ENCODE measurements at regions of chr9 and their contacts with region 1.

Region 1: GRCh38 chr9:15510789-15511575 is at the start of gene PSIP1:
- DNase-seq: peak; percentile 93
- ATAC-seq: peak; percentile 86
- H3K4me3 Mint-ChIP-seq: peak within 1 kb of the TSS; percentile 93
- H3K27ac Mint-ChIP-seq: peak within 1 kb of the TSS; percentile 100
- H3K4me1 Mint-ChIP-seq: peaks cover 49% of the 10 kb centered on the region
- H3K27me3 Mint-ChIP-seq: no peaks in the 10 kb centered on the region
- CTCF ChIP-seq: no peak
- total RNA-seq, gene PSIP1: 123 to 132 TPM

Region 2: GRCh38 chr9:15485836-15486666 is 24.9 kb before region 1 on chr9:
- CTCF ChIA-PET with region 1: interaction called, 6 read pairs
- POLR2A ChIA-PET with region 1: interaction called, 10 read pairs
- intact Hi-C with region 1: no loop called
- DNase-seq: no peak
- ATAC-seq: peak; percentile 65
- H3K4me3 Mint-ChIP-seq: no peak overlapping the region
- H3K27ac Mint-ChIP-seq: peak overlapping the region; percentile 75
- H3K4me1 Mint-ChIP-seq: peaks cover 35% of the 10 kb centered on the region
- H3K27me3 Mint-ChIP-seq: no peaks in the 10 kb centered on the region
- CTCF ChIP-seq: peak; percentile 68

Region 3: GRCh38 chr9:15522130-15522755 is 11.3 kb after region 1 on chr9:
- CTCF ChIA-PET with region 1: interaction called, 8 read pairs
- POLR2A ChIA-PET with region 1: interaction called, 14 read pairs
- intact Hi-C with region 1: no loop called
- DNase-seq: no peak
- ATAC-seq: peak; percentile 45
- H3K4me3 Mint-ChIP-seq: no peak overlapping the region
- H3K27ac Mint-ChIP-seq: no peak overlapping the region
- H3K4me1 Mint-ChIP-seq: peaks cover 4% of the 10 kb centered on the region
- H3K27me3 Mint-ChIP-seq: no peaks in the 10 kb centered on the region
- CTCF ChIP-seq: no peak

Region 4: DNA sequence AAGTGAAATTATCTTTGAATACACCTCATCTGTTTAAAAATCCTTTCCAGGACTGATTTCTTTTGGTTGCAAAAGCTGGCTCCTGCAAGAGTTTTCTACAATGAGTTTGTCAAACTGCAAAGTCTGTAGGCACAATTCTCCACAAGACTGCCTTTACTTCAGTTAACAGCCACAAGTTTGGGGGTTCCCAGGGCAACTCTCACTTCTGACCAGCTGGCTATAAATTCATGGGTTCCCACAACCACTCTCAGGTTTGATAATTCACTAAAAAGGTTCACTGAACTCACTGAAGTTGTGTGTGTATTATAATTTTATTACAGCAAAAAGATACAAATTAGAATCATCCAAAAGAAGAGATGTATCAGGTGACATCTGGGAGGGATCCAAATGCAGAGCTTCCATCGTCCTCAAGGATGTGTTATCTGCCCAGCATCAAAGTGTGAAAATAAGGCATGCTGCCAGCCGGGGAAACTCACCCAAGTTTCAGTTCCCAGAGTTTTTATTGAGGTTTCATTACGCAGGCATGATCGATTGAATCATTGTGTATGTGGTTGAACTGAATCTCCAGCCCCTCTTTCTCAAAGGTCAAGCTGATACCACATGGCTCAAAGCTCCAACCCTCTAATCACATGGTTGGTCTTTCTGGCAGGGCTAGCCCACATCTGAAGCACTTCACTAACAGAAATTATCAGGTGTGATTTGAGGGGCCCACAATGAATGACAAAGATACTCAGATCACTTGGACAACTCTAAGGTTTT is 18.8 kb after region 1 on chr9:
- CTCF ChIA-PET with region 1: interaction called, 11 read pairs
- POLR2A ChIA-PET with region 1: interaction called, 3 read pairs
- intact Hi-C with region 1: no loop called
- DNase-seq: no peak
- ATAC-seq: peak; percentile 47
- H3K4me3 Mint-ChIP-seq: no peak overlapping the region
- H3K27ac Mint-ChIP-seq: no peak overlapping the region
- H3K4me1 Mint-ChIP-seq: peaks cover 14% of the 10 kb centered on the region
- H3K27me3 Mint-ChIP-seq: no peaks in the 10 kb centered on the region
- CTCF ChIP-seq: no peak

Region 5: GRCh38 chr9:15552636-15553527 is 41.9 kb after region 1 on chr9 and contains the start of gene CCDC171:
- CTCF ChIA-PET with region 1: interaction called, 5 read pairs
- POLR2A ChIA-PET with region 1: interaction called, 27 read pairs
- intact Hi-C with region 1: loop called (anchors 5 kb)
- DNase-seq: peak; percentile 87
- ATAC-seq: peak; percentile 89
- H3K4me3 Mint-ChIP-seq: peak within 1 kb of the TSS; percentile 88
- H3K27ac Mint-ChIP-seq: peak within 1 kb of the TSS; percentile 90
- H3K4me1 Mint-ChIP-seq: peaks cover 7% of the 10 kb centered on the region
- H3K27me3 Mint-ChIP-seq: no peaks in the 10 kb centered on the region
- CTCF ChIP-seq: peak; percentile 14
- total RNA-seq, gene CCDC171: 2.1 to 2.3 TPM

Region 6: GRCh38 chr9:16869882-16870595 is 1359.1 kb after region 1 on chr9:
- CTCF ChIA-PET with region 1: no interaction called
- POLR2A ChIA-PET with region 1: no interaction called
- intact Hi-C with region 1: no loop called
- DNase-seq: no peak
- ATAC-seq: no peak
- H3K4me3 Mint-ChIP-seq: no peak overlapping the region
- H3K27ac Mint-ChIP-seq: no peak overlapping the region
- H3K4me1 Mint-ChIP-seq: peaks cover 4% of the 10 kb centered on the region
- H3K27me3 Mint-ChIP-seq: peaks cover 38% of the 10 kb centered on the region
- CTCF ChIP-seq: no peak